WTC11 (cell line): ENCODE measurements at regions of chr2 and their contacts with region 1.

Region 1: DNA sequence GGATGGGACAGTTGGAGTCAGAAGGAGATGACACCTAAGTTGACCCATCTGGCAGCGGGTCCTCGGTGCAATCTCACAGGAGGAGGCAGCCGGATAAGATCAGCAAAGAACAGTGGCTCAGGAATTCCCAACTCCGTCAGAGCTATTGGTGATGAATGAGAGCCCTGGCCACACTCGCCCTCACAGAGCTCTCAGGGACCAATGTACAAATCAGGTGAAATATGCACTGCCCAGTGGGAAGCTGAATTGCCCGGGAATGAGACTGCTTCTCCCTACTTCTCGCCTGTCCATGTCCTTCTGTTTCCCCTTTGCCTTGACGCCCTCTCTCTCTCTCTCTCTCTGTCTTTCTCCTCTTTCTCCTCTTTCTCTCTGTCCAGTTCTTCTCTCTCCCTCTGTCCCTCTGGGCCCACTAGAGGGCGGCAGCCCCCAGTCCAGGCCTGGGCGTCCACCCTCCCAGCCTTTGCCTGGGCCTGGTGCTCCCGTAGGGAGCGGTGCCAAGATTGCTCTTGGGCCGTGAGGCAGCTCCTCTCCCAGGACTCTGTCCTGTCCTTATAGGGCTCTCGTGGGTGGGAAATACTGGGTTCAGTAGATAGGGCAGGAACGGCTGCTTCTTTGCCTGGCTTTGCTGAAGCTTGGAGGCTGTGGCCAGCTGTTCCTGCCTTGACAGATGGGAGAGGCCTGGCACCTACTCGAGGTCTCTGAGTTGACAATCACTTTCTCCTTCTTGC is 28.3 kb upstream of the PUM2 start:
- DNase-seq: peak; percentile 81
- ATAC-seq: peak; percentile 97
- H3K4me3 Mint-ChIP-seq: no peak overlapping the region
- H3K27ac Mint-ChIP-seq: no peak overlapping the region
- H3K4me1 Mint-ChIP-seq: peaks cover 27% of the 10 kb centered on the region
- H3K27me3 Mint-ChIP-seq: peaks cover 4% of the 10 kb centered on the region; the same call in 1 of the 2 replicates
- CTCF ChIP-seq: peak; percentile 64

Region 2: GRCh38 chr2:20350753-20351554 is 28.0 kb before region 1 on chr2 and contains the start of gene PUM2:
- CTCF ChIA-PET with region 1: interaction called, 16 read pairs
- POLR2A ChIA-PET with region 1: no interaction called
- DNase-seq: peak; percentile 90
- ATAC-seq: peak; percentile 82
- H3K4me3 Mint-ChIP-seq: peak within 1 kb of the TSS; percentile 95
- H3K27ac Mint-ChIP-seq: peak within 1 kb of the TSS; percentile 46
- H3K4me1 Mint-ChIP-seq: peaks cover 35% of the 10 kb centered on the region
- H3K27me3 Mint-ChIP-seq: no peaks in the 10 kb centered on the region
- CTCF ChIP-seq: no peak
- total RNA-seq, gene PUM2: 84.7 to 104 TPM (median 90.0 TPM) in 3 replicates

Region 3: DNA sequence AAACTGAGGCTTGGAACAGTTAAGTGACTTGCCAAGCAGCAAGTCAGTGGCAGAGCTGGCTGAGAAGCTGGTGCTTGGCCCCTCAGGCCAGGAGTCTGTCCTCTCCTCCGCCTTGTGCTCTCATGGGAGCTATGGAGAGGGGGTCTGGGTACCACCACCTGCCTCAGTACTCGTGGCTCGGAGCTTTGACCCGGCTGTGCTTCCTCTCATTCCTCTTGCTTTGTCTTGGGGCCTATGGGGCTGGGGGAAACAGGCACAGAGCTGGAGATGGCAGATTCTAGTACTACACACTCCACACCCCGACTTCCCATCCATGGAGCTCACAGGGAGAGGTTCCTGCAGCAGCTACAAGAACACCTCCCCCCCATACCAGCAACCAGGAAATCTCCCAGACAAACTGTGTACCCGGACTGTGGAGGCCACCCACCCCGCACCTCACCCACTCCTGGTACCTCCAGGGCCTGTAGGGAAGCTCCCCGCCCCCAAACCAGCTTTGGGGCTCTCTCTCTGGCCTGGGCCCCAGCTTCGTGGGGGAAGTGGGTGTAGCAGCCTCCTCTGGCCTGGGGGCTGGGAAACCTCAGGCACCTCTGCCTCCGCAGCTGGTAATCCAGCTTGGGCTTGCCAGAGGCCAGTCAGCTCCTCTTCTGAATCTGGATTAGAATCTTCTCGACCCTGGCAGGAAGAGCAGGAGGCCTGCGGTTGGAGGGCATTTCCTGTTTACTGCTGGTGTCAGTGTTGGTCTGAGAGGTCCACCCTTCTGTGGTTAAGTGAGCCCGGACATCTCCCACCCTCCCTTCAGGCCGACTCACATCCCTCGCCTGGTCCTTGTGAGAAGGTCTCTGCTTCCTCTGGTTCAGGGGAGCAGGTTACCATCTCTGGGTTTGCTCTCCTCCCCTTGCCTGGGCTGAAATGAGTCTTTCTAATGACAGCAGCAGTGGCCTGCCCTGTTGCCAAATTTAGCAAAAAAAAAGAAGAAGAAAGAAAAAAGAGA is 45.6 kb after region 1 on chr2:
- CTCF ChIA-PET with region 1: interaction called, 44 read pairs
- POLR2A ChIA-PET with region 1: no interaction called
- DNase-seq: no peak
- ATAC-seq: no peak
- H3K4me3 Mint-ChIP-seq: no peak overlapping the region
- H3K27ac Mint-ChIP-seq: no peak overlapping the region
- H3K4me1 Mint-ChIP-seq: peaks cover 9% of the 10 kb centered on the region
- H3K27me3 Mint-ChIP-seq: no peaks in the 10 kb centered on the region
- CTCF ChIP-seq: no peak

Region 4: DNA sequence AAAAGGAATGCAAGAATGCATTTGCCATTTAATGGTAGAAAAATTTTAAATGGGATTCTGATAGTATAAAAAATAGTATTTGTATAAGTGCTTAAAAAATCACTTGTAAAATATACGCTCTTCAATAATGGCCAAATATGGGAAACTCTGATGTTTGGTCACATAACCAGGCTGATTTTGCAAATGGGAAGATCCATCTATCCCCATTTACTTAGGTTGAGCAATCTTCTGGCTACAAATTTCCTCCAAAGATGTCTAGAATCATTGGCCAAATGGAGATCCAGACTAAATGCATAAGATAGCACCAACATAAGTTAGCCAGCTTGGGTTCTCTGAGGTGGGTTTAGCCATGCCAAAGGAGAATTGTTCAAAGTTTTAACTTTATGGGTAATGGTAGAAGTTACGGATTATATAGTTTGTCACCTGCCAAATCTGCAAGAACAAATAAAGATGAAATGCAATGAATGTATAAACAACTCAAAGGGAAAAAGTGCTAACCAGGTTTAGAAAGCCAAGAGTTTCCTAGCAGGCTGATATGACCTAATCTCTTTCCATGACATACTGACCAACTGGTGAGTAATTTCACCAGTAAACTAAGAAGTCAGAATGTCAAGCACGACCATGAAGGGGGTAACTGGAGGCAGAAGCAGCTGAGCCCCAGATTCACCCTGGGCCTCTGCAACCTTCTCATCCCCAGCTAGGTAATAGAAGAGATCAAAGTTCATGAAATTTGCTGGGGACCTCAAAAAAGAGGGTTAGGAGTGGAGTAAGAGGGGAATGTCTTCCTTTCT is 77.9 kb after region 1 on chr2:
- CTCF ChIA-PET with region 1: no interaction called
- POLR2A ChIA-PET with region 1: no interaction called
- DNase-seq: no peak
- ATAC-seq: no peak
- H3K4me3 Mint-ChIP-seq: no peak overlapping the region
- H3K27ac Mint-ChIP-seq: no peak overlapping the region
- H3K4me1 Mint-ChIP-seq: peaks cover 8% of the 10 kb centered on the region
- H3K27me3 Mint-ChIP-seq: peaks cover 38% of the 10 kb centered on the region
- CTCF ChIP-seq: no peak